ENCODE measurements at regions of chr5 and their contacts with region 1.

Region 1: DNA sequence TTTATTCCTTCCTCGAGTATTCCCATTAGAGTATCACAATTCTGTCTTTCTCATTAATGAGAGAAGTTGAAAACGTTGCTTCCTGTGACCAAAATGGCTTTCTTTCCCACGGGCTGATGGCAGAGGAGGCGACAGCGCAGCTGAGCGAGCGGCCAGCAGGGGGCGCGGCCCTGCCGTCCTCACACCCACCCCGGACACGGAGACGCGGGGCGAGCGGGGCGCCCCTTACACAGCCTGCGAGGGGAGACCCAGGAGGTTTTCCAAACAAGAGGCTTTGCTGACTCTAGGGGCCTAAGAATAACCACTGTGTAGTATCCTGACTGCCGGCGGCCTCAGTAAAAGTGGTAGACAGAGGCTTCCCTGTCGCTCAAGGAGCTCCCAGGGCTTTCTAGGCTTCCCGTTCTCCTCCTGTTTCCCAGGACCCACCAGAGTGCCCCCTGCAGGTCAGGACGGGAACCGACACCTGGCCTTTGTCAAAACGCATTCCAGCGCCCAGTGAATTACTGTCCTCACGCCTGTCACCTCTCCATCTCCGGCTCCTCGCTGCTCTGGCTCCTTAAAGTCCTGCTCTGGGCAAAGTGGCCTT is 27.3 kb upstream of the FGF1 start:
- DNase-seq: peak; percentile 95
- H3K4me3 Mint-ChIP-seq: peak overlapping the region; percentile 80
- H3K27ac Mint-ChIP-seq: no peak overlapping the region
- H3K4me1 Mint-ChIP-seq: peaks cover 4% of the 10 kb centered on the region
- H3K27me3 Mint-ChIP-seq: peaks cover 30% of the 10 kb centered on the region

Region 2: GRCh38 chr5:142872795-142873194 is 159.6 kb after region 1 on chr5:
- intact Hi-C with region 1: loop called (anchors 1 kb)
- DNase-seq: no peak
- H3K4me3 Mint-ChIP-seq: no peak overlapping the region
- H3K27ac Mint-ChIP-seq: no peak overlapping the region
- H3K4me1 Mint-ChIP-seq: peaks cover 3% of the 10 kb centered on the region
- H3K27me3 Mint-ChIP-seq: no peaks in the 10 kb centered on the region

Region 3: GRCh38 chr5:142881076-142881783 is 168.0 kb after region 1 on chr5:
- intact Hi-C with region 1: loop called (anchors 1 kb)
- DNase-seq: no peak
- H3K4me3 Mint-ChIP-seq: no peak overlapping the region
- H3K27ac Mint-ChIP-seq: no peak overlapping the region
- H3K4me1 Mint-ChIP-seq: peaks cover 2% of the 10 kb centered on the region
- H3K27me3 Mint-ChIP-seq: no peaks in the 10 kb centered on the region

Measured in activated CD4-positive, alpha-beta T cell treated with anti-CD3 and anti-CD28 coated beads, Interleukin-2, amount 10 ng/mL, durations not matched to agents 24 days and 14 days (primary cell).